ENCODE measurements at regions of chr5 and their contacts with region 1.

Region 1: GRCh38 chr5:136249678-136250266 is 56.8 kb upstream of the SMIM32 start:
- DNase-seq: peak; percentile 59
- ATAC-seq: peak; percentile 73 to 77

Region 2: GRCh38 chr5:135324897-135325650 is 924.7 kb before region 1 on chr5:
- intact Hi-C with region 1: no loop called
- DNase-seq: no peak
- ATAC-seq: no peak

Region 3: GRCh38 chr5:136424835-136425584 is 175.2 kb after region 1 on chr5:
- intact Hi-C with region 1: loop called (anchors 5 to 10 kb)
- DNase-seq: peak; percentile 75
- ATAC-seq: peak in 1 of 2 donors; percentile 69

Region 4: GRCh38 chr5:136491806-136492205 is 242.0 kb after region 1 on chr5:
- intact Hi-C with region 1: no loop called
- DNase-seq: no peak
- ATAC-seq: no peak

Region 5: GRCh38 chr5:136686192-136686872 is 436.6 kb after region 1 on chr5:
- intact Hi-C with region 1: loop called in 1 of 2 experiments (anchors 10 kb)
- DNase-seq: no peak
- ATAC-seq: no peak

Region 6: DNA sequence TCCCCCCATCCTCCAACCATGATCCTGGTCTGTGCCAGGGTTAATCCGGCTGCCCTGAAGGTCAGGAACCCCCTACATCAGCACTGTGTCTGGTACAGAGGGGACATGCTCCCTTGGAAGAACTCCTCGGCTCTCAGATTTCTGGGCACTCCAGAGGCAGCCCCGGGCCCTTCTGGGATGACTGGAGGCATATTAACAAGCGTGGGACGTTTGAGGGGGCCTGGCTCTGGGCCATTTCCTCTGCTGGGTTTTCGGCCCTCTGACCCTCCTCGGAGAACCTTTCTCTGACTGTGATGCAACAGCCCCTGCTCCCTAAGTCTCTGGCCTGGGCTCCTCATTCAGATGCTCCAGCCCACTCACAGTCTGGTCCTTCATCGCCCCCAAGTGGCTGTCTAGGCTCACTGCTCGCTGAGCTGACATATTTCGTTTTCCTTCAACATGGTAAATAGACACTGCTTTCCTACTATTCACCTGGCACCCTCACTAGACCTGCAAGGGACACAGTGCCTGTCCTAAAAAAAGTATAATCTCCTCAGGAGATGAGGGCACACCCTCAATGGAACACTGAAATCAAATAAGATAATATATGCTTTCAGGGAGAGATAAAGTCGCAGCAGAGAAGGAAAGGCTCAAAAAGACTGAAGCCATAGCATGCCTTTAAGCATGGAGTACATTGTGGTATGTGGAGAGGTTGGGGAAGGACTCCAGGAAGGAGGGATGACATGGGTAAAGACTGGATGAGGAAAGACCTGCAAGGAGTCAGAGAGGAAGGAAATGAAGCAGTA is 520.3 kb after region 1 on chr5:
- intact Hi-C with region 1: loop called (anchors 2 to 5 kb)
- DNase-seq: peak; percentile 56
- ATAC-seq: peak; percentile 81 to 88